Caco-2 (cell line): ENCODE measurements at regions of chr7 and their contacts with region 1.

Region 1: DNA sequence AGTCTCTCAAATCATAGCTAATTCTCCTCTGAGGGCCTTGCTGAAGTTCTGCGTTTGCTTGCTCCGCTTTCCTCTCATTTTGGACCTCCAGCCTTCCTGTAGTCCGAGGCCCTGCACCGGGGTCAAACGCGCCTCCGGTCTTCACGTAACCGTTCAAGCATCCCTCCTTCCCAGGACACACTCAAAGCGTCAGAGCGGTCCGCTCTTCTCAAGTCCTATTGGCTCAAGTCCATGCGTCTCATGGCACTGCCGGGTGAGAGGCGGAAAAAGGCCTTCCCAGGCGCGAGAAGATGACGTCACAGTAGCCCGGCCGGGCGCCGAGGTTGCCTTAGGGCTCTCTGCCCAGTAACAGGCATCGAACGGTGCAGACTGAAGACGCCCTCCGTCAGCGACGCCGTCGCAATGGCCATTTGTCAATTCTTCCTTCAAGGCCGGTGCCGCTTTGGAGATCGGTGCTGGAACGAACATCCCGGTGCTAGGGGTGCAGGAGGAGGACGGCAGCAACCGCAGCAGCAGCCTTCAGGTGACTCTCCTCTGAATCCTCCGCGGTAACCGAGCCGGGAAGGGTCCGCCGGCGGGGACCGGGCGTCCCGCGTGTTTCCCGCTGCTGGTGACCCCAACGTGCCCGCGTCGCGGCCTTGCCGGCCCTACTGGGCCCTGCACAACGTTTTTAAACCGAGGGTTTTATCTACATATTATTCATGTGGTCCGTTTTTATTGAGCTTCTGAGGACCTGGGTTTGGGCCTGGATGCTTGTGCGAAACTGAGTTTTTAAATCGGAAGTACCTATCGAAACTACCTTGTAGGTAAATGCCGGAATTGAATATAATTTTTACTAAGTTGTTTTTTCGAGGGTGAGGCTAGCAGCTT is at the start of gene NUP42:
- DNase-seq: peak; percentile 98 to 99
- H3K4me3 ChIP-seq: peak within 1 kb of the TSS; percentile 86
- H3K4me3 Mint-ChIP-seq: peak within 1 kb of the TSS; percentile 87
- H3K27ac Mint-ChIP-seq: peak within 1 kb of the TSS; percentile 95
- H3K4me1 ChIP-seq: 0 out of 2 replicates have a peak, but pooled peaks cover 14% of the 10 kb centered on the region
- H3K4me1 Mint-ChIP-seq: no peaks in the 10 kb centered on the region
- H3K27me3 ChIP-seq: no peaks in the 10 kb centered on the region; the same call in 1 of the 2 replicates
- H3K27me3 Mint-ChIP-seq: no peaks in the 10 kb centered on the region
- CTCF ChIP-seq: no peak
- total RNA-seq, gene NUP42: 38.6 and 41.6 TPM in 2 replicates

Region 2: GRCh38 chr7:23043441-23043840 is 138.5 kb before region 1 on chr7:
- CTCF ChIA-PET with region 1: no interaction called
- POLR2A ChIA-PET with region 1: no interaction called
- intact Hi-C with region 1: no loop called
- DNase-seq: no peak
- H3K4me3 ChIP-seq: no peak overlapping the region
- H3K4me3 Mint-ChIP-seq: no peak overlapping the region
- H3K27ac Mint-ChIP-seq: no peak overlapping the region
- H3K4me1 ChIP-seq: peaks cover 4% of the 10 kb centered on the region
- H3K4me1 Mint-ChIP-seq: no peaks in the 10 kb centered on the region
- H3K27me3 ChIP-seq: no peaks in the 10 kb centered on the region
- H3K27me3 Mint-ChIP-seq: no peaks in the 10 kb centered on the region
- CTCF ChIP-seq: no peak

Region 3: GRCh38 chr7:23105644-23106056 is 76.3 kb before region 1 on chr7 and contains the start of gene KLHL7:
- CTCF ChIA-PET with region 1: interaction called, 5 read pairs
- POLR2A ChIA-PET with region 1: no interaction called
- intact Hi-C with region 1: loop called (anchors 1 kb)
- DNase-seq: peak; percentile 96 to 97
- H3K4me3 ChIP-seq: peak within 1 kb of the TSS; percentile 98
- H3K4me3 Mint-ChIP-seq: peak within 1 kb of the TSS; percentile 96
- H3K27ac Mint-ChIP-seq: peak within 1 kb of the TSS; percentile 98
- H3K4me1 ChIP-seq: peaks cover 11% of the 10 kb centered on the region
- H3K4me1 Mint-ChIP-seq: no peaks in the 10 kb centered on the region
- H3K27me3 ChIP-seq: no peaks in the 10 kb centered on the region
- H3K27me3 Mint-ChIP-seq: no peaks in the 10 kb centered on the region
- CTCF ChIP-seq: no peak
- total RNA-seq, gene KLHL7: 35.8 and 40.6 TPM in 2 replicates

Region 4: DNA sequence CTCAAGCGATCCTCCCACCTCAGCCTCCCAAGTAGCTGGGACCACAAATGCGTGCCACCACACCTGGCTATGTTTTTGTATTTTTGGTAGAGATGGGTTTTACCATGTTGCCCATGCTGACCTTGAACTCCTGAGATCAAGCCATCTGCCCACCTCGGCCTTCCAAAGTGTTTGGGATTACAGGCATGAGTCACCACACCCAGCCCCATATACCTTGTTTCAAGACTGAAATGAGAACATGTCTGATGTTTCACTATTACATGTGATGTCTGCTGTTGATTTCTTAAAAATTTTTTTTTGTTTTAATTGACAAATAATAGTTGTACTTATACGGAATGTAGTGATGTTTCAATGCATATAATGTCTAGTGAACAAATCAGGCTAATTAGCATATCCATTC is 61.8 kb before region 1 on chr7:
- CTCF ChIA-PET with region 1: no interaction called
- POLR2A ChIA-PET with region 1: no interaction called
- intact Hi-C with region 1: no loop called
- DNase-seq: no peak
- H3K4me3 ChIP-seq: no peak overlapping the region
- H3K4me3 Mint-ChIP-seq: no peak overlapping the region
- H3K27ac Mint-ChIP-seq: no peak overlapping the region
- H3K4me1 ChIP-seq: no peaks in the 10 kb centered on the region
- H3K4me1 Mint-ChIP-seq: no peaks in the 10 kb centered on the region
- H3K27me3 ChIP-seq: no peaks in the 10 kb centered on the region
- H3K27me3 Mint-ChIP-seq: no peaks in the 10 kb centered on the region
- CTCF ChIP-seq: no peak

Region 5: DNA sequence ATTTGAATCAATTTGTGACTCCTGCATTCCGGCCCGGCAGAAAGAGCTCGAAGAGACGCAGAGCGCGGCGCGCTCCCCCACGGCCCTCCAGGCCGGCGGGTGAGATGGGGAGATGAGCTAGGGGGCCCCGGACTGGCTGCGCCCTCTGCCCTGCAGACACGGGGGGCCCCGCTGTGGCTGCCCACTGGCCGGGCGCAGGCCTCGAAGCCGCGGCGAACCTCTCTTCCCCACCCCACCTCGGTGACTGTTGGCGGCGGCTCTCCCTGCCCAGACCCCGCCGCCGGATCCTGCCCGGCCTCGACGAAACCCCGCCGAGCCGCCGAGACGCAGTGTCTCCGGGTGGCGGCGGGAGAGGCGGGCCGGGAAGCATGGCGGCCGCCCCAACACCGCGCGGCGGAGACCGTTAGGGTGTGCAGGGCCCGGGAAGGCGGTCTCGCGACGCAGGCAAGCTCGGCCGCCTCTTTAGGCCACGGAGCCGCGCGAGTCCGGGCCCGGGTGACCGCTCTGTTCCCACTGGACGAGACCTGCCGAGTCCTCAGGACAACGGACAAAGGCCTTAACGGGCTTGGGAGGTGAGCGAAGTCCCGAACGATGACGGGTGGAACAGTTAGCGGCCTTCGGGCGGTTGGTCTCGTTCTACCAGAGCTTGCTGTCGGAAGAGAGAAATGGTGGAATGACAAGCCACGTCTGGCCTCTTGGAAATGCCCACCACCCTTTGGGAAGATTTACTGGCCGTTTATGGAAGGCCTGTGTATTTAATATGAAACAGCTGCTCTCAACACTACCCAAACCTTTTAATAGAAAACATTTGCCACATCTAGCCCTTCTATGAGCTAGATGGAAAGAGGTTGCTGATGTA is 24.2 kb after region 1 on chr7:
- CTCF ChIA-PET with region 1: no interaction called
- POLR2A ChIA-PET with region 1: no interaction called
- intact Hi-C with region 1: no loop called
- DNase-seq: no peak
- H3K4me3 ChIP-seq: no peak overlapping the region
- H3K4me3 Mint-ChIP-seq: no peak overlapping the region
- H3K27ac Mint-ChIP-seq: no peak overlapping the region
- H3K4me1 ChIP-seq: no peaks in the 10 kb centered on the region
- H3K4me1 Mint-ChIP-seq: peaks cover 8% of the 10 kb centered on the region
- H3K27me3 ChIP-seq: no peaks in the 10 kb centered on the region
- H3K27me3 Mint-ChIP-seq: no peaks in the 10 kb centered on the region
- CTCF ChIP-seq: no peak

Region 6: DNA sequence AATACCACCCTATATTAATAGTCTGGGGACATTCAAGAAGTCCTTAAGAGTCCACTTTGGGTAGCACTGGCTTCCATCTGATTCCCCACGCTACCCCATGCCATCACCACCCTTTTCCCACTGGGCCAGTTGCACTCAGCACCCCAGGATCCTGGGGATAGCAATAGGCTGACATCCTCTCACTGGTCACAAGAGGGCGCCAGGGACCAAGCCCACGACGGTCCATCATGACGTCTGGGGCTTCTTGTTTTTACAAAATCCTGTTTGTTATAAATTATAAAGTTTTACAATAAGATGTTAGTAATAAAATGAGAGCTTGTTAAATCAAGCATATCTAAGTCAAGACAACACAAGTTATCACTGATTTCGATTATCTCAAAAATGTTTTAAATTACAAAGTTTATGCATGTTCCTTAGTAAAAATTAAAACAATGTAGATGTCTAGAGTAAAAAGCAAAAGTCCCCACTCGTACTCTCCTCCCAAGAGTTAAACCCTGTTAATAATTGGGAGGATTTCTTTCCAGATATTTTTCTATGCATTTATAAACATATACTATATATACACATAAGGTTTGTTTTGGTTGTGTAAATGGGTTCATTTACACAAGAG is 80.0 kb after region 1 on chr7:
- CTCF ChIA-PET with region 1: interaction called, 3 read pairs
- POLR2A ChIA-PET with region 1: no interaction called
- intact Hi-C with region 1: loop called (anchors 5 kb)
- DNase-seq: peak; percentile 62 to 77
- H3K4me3 ChIP-seq: no peak overlapping the region
- H3K4me3 Mint-ChIP-seq: no peak overlapping the region
- H3K27ac Mint-ChIP-seq: no peak overlapping the region
- H3K4me1 ChIP-seq: no peaks in the 10 kb centered on the region
- H3K4me1 Mint-ChIP-seq: peaks cover 7% of the 10 kb centered on the region
- H3K27me3 ChIP-seq: no peaks in the 10 kb centered on the region
- H3K27me3 Mint-ChIP-seq: no peaks in the 10 kb centered on the region
- CTCF ChIP-seq: peak; percentile 85 to 93

Region 7: GRCh38 chr7:23308754-23309153 is 126.8 kb after region 1 on chr7:
- CTCF ChIA-PET with region 1: no interaction called
- POLR2A ChIA-PET with region 1: interaction called, 14 read pairs
- intact Hi-C with region 1: no loop called
- DNase-seq: no peak
- H3K4me3 ChIP-seq: no peak overlapping the region
- H3K4me3 Mint-ChIP-seq: no peak overlapping the region
- H3K27ac Mint-ChIP-seq: peak overlapping the region; percentile 8
- H3K4me1 ChIP-seq: 0 out of 2 replicates have a peak, but pooled peaks cover 5% of the 10 kb centered on the region
- H3K4me1 Mint-ChIP-seq: peaks cover 12% of the 10 kb centered on the region
- H3K27me3 ChIP-seq: no peaks in the 10 kb centered on the region
- H3K27me3 Mint-ChIP-seq: no peaks in the 10 kb centered on the region
- CTCF ChIP-seq: no peak

Region 8: GRCh38 chr7:23531794-23532489 is 350.0 kb after region 1 on chr7 and contains the start of gene TRA2A:
- CTCF ChIA-PET with region 1: no interaction called
- POLR2A ChIA-PET with region 1: interaction called, 7 read pairs
- intact Hi-C with region 1: loop called (anchors 10 kb)
- DNase-seq: peak; percentile 97
- H3K4me3 ChIP-seq: peak within 1 kb of the TSS; percentile 99
- H3K4me3 Mint-ChIP-seq: peak within 1 kb of the TSS; percentile 91
- H3K27ac Mint-ChIP-seq: peak within 1 kb of the TSS; percentile 99
- H3K4me1 ChIP-seq: peaks cover 19% of the 10 kb centered on the region
- H3K4me1 Mint-ChIP-seq: peaks cover 16% of the 10 kb centered on the region
- H3K27me3 ChIP-seq: no peaks in the 10 kb centered on the region
- H3K27me3 Mint-ChIP-seq: no peaks in the 10 kb centered on the region
- CTCF ChIP-seq: no peak
- total RNA-seq, gene TRA2A: 123 and 132 TPM in 2 replicates

Region 9: DNA sequence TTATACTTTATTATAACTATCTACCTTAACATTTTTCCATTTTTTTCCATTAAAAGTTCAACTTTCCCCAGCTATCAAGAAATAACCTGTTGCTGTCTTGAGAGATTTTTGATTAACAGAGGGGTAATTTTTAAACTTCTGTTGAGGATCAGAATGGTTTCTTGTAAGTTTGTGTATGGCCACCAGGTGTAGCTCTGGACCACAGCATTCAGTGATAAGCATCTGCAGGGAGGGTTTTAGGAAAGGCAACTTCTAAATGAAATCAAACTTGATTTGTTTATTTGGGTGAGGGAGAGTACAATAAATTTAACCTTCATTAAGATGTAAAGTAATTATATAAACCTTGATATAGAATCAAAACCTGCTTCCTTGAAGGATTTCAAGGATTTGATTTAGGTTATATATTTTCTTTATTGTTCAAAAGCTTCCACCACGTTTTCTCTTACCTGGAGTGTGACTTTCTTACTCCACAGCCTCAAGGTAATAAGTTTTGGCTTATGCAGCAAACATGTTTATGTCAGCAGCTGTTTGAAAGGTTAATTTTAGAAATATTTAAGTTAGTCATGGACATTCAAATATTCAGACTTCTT is 681.4 kb after region 1 on chr7:
- CTCF ChIA-PET with region 1: no interaction called
- POLR2A ChIA-PET with region 1: no interaction called
- intact Hi-C with region 1: no loop called
- DNase-seq: peak in 1 of 2 experiments; percentile 44
- H3K4me3 ChIP-seq: no peak overlapping the region
- H3K4me3 Mint-ChIP-seq: no peak overlapping the region
- H3K27ac Mint-ChIP-seq: no peak overlapping the region
- H3K4me1 ChIP-seq: no peaks in the 10 kb centered on the region
- H3K4me1 Mint-ChIP-seq: no peaks in the 10 kb centered on the region
- H3K27me3 ChIP-seq: no peaks in the 10 kb centered on the region
- H3K27me3 Mint-ChIP-seq: peaks cover 7% of the 10 kb centered on the region
- CTCF ChIP-seq: peak; percentile 62 to 83